Naive thymus-derived CD4-positive, alpha-beta T cell (primary cell): ENCODE measurements at regions of chr18 and their contacts with region 1.

Region 1: GRCh38 chr18:74896390-74896991 is 298.8 kb downstream of the ZNF407 start:
- DNase-seq: peak in 6 of 9 donors; percentile 19 to 45 (median 36)
- ATAC-seq: peak; percentile 76
- H3K4me3 ChIP-seq: no peak overlapping the region
- H3K4me3 Mint-ChIP-seq: no peak overlapping the region
- H3K27ac ChIP-seq: no peak overlapping the region
- H3K27ac Mint-ChIP-seq: peak overlapping the region in 2 of 9 donors; percentile 1 to 11
- H3K4me1 ChIP-seq: no peaks in the 10 kb centered on the region
- H3K4me1 Mint-ChIP-seq: peaks cover 0 to 21% (median 7%) of the 10 kb centered on the region in 7 donors
- H3K27me3 ChIP-seq: no peaks in the 10 kb centered on the region
- H3K27me3 Mint-ChIP-seq: no peaks in the 10 kb centered on the region

Region 2: DNA sequence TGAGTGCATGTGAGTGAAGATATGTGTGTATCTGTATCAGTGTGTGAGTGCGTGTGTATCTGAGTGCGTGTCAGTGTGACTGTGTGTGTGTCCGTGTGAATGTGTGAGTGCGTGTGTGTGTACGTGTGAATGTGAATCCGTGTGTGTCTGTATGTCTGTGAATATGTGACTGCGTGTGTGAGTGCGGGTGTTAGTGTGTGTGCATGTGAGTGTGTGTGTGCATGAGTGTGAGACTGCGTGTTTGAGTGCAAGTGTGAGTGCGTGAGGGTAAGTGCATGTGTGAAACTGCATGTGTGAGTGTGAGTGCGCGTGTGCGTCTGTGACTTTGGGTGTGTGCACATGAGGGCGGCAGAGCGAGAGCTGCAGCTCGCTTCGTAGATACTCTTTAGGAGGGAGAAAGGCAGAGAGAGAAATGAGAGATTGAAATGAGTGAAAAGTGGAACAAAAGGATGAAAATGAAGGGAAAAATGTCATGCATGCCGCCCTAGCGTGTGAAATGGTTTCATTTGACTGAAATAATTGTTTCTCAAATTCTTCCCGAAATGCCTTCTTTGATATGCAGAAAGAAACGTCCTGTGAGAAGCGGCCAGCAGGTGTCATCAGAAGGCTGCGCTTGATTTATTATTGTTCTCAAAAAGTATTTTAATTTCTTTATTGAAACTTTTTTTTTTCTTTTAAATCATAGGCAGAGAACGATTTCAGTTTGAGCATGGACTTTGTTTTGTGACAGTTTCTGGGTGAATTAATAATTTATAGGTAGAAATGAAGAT is 273.3 kb before region 1 on chr18:
- CTCF ChIA-PET with region 1: interaction called, 6 read pairs
- POLR2A ChIA-PET with region 1: no interaction called
- intact Hi-C with region 1: loop called in 1 of 2 experiments (anchors 1 kb)
- DNase-seq: peak in 7 of 9 donors; percentile 16 to 62 (median 48)
- ATAC-seq: peak; percentile 52
- H3K4me3 ChIP-seq: no peak overlapping the region
- H3K4me3 Mint-ChIP-seq: no peak overlapping the region
- H3K27ac ChIP-seq: no peak overlapping the region
- H3K27ac Mint-ChIP-seq: no peak overlapping the region
- H3K4me1 ChIP-seq: peaks cover 3 to 9% of the 10 kb centered on the region in 2 donors
- H3K4me1 Mint-ChIP-seq: peaks cover 6 to 28% (median 13%) of the 10 kb centered on the region in 7 donors
- H3K27me3 ChIP-seq: no peaks in the 10 kb centered on the region
- H3K27me3 Mint-ChIP-seq: no peaks in the 10 kb centered on the region

Region 3: DNA sequence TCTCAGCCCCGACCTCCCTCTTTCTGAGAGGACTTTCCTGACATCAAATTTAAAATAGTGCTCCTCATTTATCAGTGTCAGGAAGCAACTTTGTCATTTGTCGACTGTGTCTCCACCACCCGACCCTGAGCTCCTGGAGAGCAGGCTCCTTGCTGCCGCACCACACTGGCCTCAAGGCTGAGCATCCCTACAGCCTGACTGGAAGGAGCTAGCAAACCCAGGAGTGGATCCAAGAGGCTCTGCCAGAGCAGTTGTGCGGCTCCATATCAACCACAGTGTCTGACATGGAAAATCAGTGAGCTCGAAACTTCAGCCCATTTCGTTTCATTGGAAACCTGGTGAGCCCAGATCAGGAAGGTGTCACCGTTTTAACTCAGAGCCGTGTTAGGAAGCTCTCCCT is 187.3 kb after region 1 on chr18:
- CTCF ChIA-PET with region 1: no interaction called
- POLR2A ChIA-PET with region 1: no interaction called
- intact Hi-C with region 1: loop called in 1 of 2 experiments (anchors 1 kb)
- DNase-seq: no peak
- ATAC-seq: no peak
- H3K4me3 ChIP-seq: no peak overlapping the region
- H3K4me3 Mint-ChIP-seq: no peak overlapping the region
- H3K27ac ChIP-seq: no peak overlapping the region
- H3K27ac Mint-ChIP-seq: no peak overlapping the region
- H3K4me1 ChIP-seq: no peaks in the 10 kb centered on the region
- H3K4me1 Mint-ChIP-seq: no peaks in the 10 kb centered on the region
- H3K27me3 ChIP-seq: no peaks in the 10 kb centered on the region
- H3K27me3 Mint-ChIP-seq: peaks cover 0 to 6% (median 0%) of the 10 kb centered on the region in 5 donors

Region 4: DNA sequence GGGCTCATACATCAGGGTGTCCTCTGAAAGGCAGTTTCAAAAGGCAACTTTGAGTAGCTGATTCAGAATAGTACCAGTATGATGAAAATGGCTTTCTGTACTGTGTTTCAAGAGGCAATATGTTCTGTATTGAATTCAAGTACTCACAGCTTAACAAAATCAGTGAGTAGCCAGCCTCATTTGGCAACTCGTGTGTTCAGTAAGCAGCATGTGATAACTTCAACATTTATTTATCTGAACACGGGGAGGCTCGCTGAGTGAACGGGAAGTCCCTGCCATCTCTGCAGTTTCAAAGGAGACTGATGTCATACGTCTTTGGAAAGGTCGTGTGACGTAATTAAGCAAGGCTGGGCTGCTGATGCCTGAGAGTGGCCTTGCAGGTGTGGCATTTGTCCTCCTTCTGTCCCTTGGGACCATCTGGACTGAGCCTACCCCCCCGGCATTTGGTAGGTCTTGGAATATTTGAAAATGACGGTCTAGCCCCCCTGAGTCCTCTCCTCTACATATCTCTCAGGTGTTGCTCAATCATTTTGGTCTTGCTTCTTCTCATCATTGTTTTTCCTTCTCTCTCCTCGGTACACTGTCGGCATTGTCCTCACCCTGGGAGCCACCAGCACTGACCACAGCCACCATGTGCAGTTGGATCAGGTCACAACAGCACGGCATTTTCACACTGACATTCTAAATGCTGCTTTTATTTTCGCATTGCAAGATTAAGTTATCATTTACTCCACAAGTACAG is 468.2 kb after region 1 on chr18:
- CTCF ChIA-PET with region 1: no interaction called
- POLR2A ChIA-PET with region 1: no interaction called
- intact Hi-C with region 1: loop called in 1 of 2 experiments (anchors 1 kb)
- DNase-seq: no peak
- ATAC-seq: no peak
- H3K4me3 ChIP-seq: no peak overlapping the region
- H3K4me3 Mint-ChIP-seq: no peak overlapping the region
- H3K27ac ChIP-seq: no peak overlapping the region
- H3K27ac Mint-ChIP-seq: peak overlapping the region in 1 of 9 donors; percentile 12
- H3K4me1 ChIP-seq: no peaks in the 10 kb centered on the region
- H3K4me1 Mint-ChIP-seq: peaks cover 0 to 1% (median 0%) of the 10 kb centered on the region in 7 donors
- H3K27me3 ChIP-seq: no peaks in the 10 kb centered on the region
- H3K27me3 Mint-ChIP-seq: peaks cover 0 to 2% (median under 1%) of the 10 kb centered on the region in 5 donors

Region 5: GRCh38 chr18:76349067-76349715 is 1452.7 kb after region 1 on chr18:
- CTCF ChIA-PET with region 1: no interaction called
- POLR2A ChIA-PET with region 1: no interaction called
- intact Hi-C with region 1: loop called in 1 of 2 experiments (anchors 1 kb)
- DNase-seq: peak in 8 of 9 donors; percentile 42 to 70 (median 60)
- ATAC-seq: peak; percentile 68
- H3K4me3 ChIP-seq: no peak overlapping the region
- H3K4me3 Mint-ChIP-seq: peak overlapping the region in 5 of 10 donors; percentile 4 to 49 (median 12)
- H3K27ac ChIP-seq: no peak overlapping the region
- H3K27ac Mint-ChIP-seq: peak overlapping the region in 2 of 9 donors; percentile 5 to 39
- H3K4me1 ChIP-seq: peaks cover 0 to 3% of the 10 kb centered on the region in 2 donors
- H3K4me1 Mint-ChIP-seq: peaks cover 4 to 9% (median 7%) of the 10 kb centered on the region in 7 donors
- H3K27me3 ChIP-seq: no peaks in the 10 kb centered on the region
- H3K27me3 Mint-ChIP-seq: peaks cover 0 to 9% (median 0%) of the 10 kb centered on the region in 5 donors